GM10248 (cell line): ENCODE measurements at regions of chr1 and their contacts with region 1.

Region 1: GRCh38 chr1:154936555-154937084 is at the start of gene PMVK:
- DNase-seq: peak; percentile 95
- CTCF ChIP-seq: peak; percentile 49

Region 2: DNA sequence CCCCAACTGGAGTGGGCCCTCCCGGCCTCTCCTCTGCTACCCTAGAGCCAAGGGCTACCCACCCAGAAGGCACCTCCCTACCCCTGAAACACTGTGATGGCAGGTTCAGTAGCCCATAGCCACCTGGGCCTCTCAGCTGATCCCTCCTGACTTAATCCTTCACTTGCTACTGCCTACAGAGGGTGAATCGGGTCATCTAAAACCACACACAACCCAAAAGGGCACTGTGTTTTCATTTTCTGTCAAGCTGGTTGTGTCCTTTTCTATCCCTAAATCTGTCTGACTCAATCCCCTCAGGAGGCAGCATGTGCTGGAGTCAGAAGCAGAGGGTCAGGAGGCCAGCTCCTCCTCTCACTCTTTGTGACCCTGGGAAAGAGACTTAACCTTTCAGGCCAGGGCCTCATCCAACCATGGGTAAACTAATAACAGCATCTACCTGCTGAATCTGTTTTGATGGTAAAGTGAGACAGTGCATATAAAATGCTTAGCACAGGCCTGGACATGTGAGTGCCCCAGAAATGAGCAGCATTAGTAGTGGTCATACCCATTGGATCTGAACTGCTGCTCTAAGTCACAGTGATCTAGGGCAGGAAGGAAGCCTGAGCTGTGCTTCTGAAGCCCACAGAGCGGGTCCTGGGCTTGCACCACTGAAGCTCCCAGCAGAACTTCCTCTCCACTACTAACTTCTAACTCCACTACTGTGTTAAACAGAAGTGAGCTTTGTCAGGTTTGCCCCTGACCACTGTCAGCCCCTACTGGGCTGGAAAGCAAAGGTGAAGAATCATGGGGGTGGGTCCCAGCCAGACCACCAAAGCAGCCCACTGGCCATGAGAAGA is 11.1 kb before region 1 on chr1:
- CTCF ChIA-PET with region 1: interaction called, 18 read pairs
- POLR2A ChIA-PET with region 1: no interaction called
- DNase-seq: no peak
- CTCF ChIP-seq: no peak

Region 3: GRCh38 chr1:155308493-155309422 is 372.1 kb after region 1 on chr1 and contains the start of gene FDPS:
- CTCF ChIA-PET with region 1: no interaction called
- POLR2A ChIA-PET with region 1: no interaction called
- DNase-seq: peak; percentile 98
- CTCF ChIP-seq: no peak